ENCODE measurements at regions of chr21 and their contacts with region 1.

Region 1: DNA sequence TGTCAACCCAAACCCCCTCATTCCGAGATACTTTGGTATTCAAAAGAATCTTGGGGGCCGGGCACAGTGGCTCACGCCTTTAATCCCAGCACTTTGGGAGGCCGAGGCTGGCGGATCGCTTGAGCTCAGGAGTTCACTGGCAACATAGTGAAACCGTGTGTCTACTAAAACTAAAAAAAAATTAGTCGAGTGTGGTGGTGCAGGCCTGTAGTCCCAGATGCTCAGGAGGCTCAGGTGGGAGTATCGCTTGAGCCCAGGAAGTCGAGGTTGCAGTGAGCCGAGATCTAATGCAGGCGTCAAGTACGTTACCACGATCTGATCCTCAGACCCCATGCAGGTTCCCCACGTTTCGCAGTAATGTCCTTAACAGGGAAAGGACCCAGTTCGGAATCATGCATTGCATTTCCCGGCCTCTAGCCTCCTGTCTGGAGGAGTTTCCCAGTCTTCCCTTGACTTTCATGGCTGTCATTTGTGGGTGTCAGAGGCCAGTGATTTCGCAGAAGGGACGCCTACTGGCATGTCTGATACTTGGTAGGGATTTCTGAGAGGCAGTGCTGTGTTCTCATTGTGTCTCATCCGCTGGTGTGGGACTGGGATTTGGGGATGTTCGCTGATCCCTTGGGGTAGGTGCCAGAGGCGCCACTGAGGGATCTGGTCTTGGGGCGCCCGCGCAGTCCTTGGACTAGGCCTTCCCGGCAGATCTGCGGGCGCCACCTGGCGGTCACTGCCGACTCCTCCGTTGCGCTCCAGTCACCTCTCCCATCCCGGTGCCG is 39.3 kb upstream of the HMGN1 start:
- DNase-seq: peak; percentile 88
- H3K4me3 Mint-ChIP-seq: peak overlapping the region; percentile 68
- H3K27ac Mint-ChIP-seq: peak overlapping the region; percentile 31
- H3K4me1 Mint-ChIP-seq: peaks cover 10% of the 10 kb centered on the region
- H3K27me3 Mint-ChIP-seq: no peaks in the 10 kb centered on the region
- CTCF ChIP-seq: peak; percentile 85

Region 2: DNA sequence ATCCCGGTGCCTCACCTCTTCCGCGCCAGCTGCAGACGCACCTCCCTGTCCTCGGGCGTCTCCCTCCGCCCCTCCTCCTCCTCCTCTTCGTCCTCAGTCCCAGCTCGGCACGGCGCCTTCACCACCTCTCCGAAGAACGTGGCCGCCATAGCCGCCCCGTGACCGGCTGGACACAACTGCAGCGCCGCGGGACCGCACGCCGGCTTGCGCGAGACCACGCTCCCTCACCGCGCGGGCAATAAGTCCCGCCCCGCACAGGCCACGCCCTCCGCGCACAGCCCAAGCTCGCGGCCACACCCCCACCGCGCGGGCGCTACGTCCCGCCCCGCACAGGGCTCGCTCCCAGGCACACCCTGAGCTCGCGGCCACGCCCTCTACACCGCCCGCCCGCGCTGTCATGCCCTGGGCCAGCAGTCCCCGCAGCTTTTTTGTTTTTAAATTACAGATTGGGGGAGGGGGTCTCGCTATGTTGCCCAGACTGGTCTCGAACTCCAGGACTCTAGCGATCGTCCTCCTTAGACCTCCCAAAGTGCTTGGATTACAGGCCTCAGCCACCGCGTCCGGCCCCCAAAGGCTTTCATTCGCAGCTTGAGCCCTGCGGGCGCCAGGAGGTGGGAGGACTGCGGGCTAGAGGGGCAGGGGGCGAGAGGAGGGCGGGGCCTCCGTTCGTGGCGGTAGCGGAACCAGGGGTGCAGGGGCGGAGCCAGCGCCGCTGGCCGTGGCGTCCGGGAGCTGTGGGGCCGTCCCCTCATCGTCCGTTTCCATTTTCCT is 204.8 kb before region 1 on chr21 and contains the start of gene PSMG1:
- CTCF ChIA-PET with region 1: interaction called, 5 read pairs
- POLR2A ChIA-PET with region 1: interaction called, 6 read pairs
- intact Hi-C with region 1: loop called (anchors 2 kb)
- DNase-seq: peak; percentile 95
- H3K4me3 Mint-ChIP-seq: peak within 1 kb of the TSS; percentile 99
- H3K27ac Mint-ChIP-seq: peak within 1 kb of the TSS; percentile 95
- H3K4me1 Mint-ChIP-seq: peaks cover 33% of the 10 kb centered on the region
- H3K27me3 Mint-ChIP-seq: no peaks in the 10 kb centered on the region
- CTCF ChIP-seq: no peak
- total RNA-seq, gene PSMG1: 79.9 and 116 TPM in 2 replicates

Region 3: GRCh38 chr21:39313571-39314142 is 74.6 kb before region 1 on chr21 and contains the start of gene BRWD1:
- CTCF ChIA-PET with region 1: interaction called, 4 read pairs
- POLR2A ChIA-PET with region 1: interaction called, 45 read pairs
- intact Hi-C with region 1: loop called (anchors 1 kb)
- DNase-seq: peak; percentile 78
- H3K4me3 Mint-ChIP-seq: peak within 1 kb of the TSS; percentile 76
- H3K27ac Mint-ChIP-seq: peak within 1 kb of the TSS; percentile 94
- H3K4me1 Mint-ChIP-seq: peaks cover 20% of the 10 kb centered on the region
- H3K27me3 Mint-ChIP-seq: no peaks in the 10 kb centered on the region
- CTCF ChIP-seq: no peak
- total RNA-seq, gene BRWD1: 36.0 and 45.4 TPM in 2 replicates

Region 4: GRCh38 chr21:39373644-39374043 is 14.6 kb before region 1 on chr21:
- CTCF ChIA-PET with region 1: interaction called, 22 read pairs
- POLR2A ChIA-PET with region 1: interaction called, 7 read pairs
- intact Hi-C with region 1: no loop called
- DNase-seq: peak; percentile 39
- H3K4me3 Mint-ChIP-seq: no peak overlapping the region
- H3K27ac Mint-ChIP-seq: no peak overlapping the region
- H3K4me1 Mint-ChIP-seq: peaks cover 7% of the 10 kb centered on the region
- H3K27me3 Mint-ChIP-seq: no peaks in the 10 kb centered on the region
- CTCF ChIP-seq: peak; percentile 32